Calu3 (cell line): ENCODE measurements at regions of chr1 and their contacts with region 1.

Region 1: DNA sequence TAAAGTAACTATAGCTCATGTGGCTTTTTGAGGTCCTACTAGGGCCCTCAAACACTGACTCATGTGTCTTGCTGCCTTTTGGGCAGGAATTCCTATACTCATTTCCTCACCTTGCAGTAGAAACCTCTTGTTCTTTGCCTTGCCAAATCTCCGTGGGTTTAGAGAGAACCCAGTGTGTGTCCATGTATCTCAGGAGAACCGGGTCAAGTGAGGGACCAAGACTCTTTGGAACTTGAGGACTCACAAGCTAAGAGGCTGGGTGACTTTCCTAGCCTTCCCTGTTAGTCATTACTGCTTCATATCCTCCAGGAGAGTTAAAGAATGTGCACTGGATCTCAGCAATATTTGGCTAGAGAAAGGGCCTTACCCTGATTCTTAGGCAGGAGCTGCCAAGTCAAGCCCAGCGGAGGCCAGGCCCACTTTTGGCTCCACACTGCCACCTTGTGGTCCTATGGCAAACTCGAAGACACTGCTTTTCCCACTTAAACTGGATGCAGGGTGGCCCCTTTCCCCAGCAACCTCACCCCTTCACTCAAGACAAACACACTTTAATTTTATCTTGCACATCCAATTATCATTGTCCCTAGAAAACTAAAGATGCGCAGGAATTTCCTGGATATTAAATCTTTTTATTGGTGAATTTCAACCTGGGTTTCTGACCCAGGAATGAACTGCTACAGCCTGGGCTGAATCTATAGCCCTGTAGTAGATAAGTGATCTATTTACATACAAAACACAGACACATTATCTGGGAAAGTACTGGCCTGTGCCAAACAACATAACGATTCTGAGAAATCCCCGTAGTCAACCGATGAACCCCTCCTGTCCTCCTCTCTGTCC is 10.6 kb downstream of the AVPR1B start:
- DNase-seq: peak; percentile 87
- H3K4me3 Mint-ChIP-seq: no peak overlapping the region
- H3K27ac Mint-ChIP-seq: peak overlapping the region; percentile 42
- H3K4me1 Mint-ChIP-seq: peaks cover 14% of the 10 kb centered on the region
- H3K27me3 Mint-ChIP-seq: no peaks in the 10 kb centered on the region
- CTCF ChIP-seq: peak; percentile 81

Region 2: DNA sequence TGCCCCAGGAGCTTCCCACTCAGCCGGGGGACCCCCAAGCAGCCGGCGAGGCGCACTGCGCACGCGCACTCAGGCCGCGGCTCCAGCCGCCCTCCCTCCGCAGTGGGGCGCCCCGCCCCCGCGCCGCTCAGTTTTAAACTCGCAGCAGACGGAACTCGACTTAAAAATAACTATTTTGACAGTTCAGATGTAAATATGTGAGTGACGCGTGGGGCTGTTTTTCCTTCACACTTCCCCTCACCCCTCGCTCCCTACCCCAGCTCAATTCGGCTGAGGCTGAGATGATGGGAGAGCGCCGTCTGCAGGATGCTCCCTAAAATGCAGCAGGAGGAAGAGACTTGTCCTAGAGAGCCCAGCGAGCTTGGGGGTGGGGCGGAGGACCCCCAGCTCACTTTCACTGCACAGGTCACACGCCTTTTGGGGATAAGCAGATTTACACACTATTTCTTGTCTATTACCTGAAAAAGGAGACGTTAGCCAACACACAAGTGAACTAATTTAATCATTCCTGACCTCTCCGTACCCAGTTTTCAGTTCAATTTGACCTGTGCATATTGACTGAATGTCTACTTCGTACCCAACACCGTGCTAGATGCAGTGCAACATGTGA is 675.7 kb before region 1 on chr1:
- CTCF ChIA-PET with region 1: no interaction called
- intact Hi-C with region 1: no loop called
- DNase-seq: peak; percentile 76
- H3K4me3 Mint-ChIP-seq: peak overlapping the region; percentile 63
- H3K27ac Mint-ChIP-seq: peak overlapping the region; percentile 13
- H3K4me1 Mint-ChIP-seq: peaks cover 8% of the 10 kb centered on the region
- H3K27me3 Mint-ChIP-seq: peaks cover 65% of the 10 kb centered on the region
- CTCF ChIP-seq: peak; percentile 94

Region 3: GRCh38 chr1:205791568-205792180 is 314.9 kb before region 1 on chr1:
- CTCF ChIA-PET with region 1: no interaction called
- intact Hi-C with region 1: loop called (anchors 10 kb)
- DNase-seq: peak; percentile 81
- H3K4me3 Mint-ChIP-seq: no peak overlapping the region
- H3K27ac Mint-ChIP-seq: no peak overlapping the region
- H3K4me1 Mint-ChIP-seq: no peaks in the 10 kb centered on the region
- H3K27me3 Mint-ChIP-seq: no peaks in the 10 kb centered on the region
- CTCF ChIP-seq: peak; percentile 89

Region 4: GRCh38 chr1:205919026-205919746 is 187.4 kb before region 1 on chr1:
- CTCF ChIA-PET with region 1: no interaction called
- intact Hi-C with region 1: loop called (anchors 5 kb)
- DNase-seq: peak; percentile 87
- H3K4me3 Mint-ChIP-seq: no peak overlapping the region
- H3K27ac Mint-ChIP-seq: no peak overlapping the region
- H3K4me1 Mint-ChIP-seq: peaks cover 8% of the 10 kb centered on the region
- H3K27me3 Mint-ChIP-seq: no peaks in the 10 kb centered on the region
- CTCF ChIP-seq: peak; percentile 97

Region 5: DNA sequence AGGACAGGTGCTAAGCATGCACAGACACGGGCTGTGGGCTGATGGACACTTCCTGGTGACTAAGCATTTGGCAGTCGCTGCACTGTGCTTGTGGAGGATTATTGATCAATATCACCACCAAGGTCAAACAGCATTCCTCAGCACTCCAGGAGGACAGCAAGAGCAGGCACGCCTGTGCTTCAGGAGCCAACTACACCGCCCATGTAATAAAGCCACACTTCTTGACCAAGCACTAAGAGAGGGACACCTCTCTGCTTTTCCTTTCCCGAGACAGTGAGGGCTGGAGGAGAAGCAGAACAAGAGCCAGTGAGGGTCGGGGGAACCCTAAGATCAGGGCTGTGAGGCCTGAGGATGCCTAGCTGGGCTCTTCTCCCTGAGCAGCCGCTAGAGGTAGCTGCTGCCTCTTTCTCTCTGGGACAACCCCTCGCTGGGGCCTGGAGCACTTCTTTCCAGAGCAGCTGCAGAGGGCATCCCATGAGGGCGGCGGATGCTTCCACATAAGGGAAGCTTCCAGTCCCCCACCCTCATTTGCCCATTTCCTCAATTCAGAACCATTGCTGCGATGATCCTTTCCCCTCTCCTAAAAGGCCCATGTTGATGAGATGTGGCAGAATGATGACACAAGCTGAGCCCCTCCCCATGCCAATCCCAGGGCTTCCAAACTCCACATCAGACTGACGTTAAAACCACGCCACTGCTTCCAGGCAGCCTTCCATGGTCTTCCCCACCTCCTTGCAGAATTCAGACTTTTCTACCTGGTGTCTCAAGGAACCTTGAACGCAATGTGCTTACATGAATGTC is 122.4 kb before region 1 on chr1:
- CTCF ChIA-PET with region 1: interaction called, 24 read pairs
- intact Hi-C with region 1: loop called (anchors 1 kb)
- DNase-seq: peak; percentile 85
- H3K4me3 Mint-ChIP-seq: peak overlapping the region; percentile 34
- H3K27ac Mint-ChIP-seq: peak overlapping the region; percentile 55
- H3K4me1 Mint-ChIP-seq: peaks cover 35% of the 10 kb centered on the region
- H3K27me3 Mint-ChIP-seq: no peaks in the 10 kb centered on the region
- CTCF ChIP-seq: peak; percentile 73

Region 6: GRCh38 chr1:206030714-206031113 is 75.8 kb before region 1 on chr1:
- CTCF ChIA-PET with region 1: interaction called, 15 read pairs
- intact Hi-C with region 1: loop called (anchors 2 kb)
- DNase-seq: peak; percentile 90
- H3K4me3 Mint-ChIP-seq: no peak overlapping the region
- H3K27ac Mint-ChIP-seq: peak overlapping the region; percentile 20
- H3K4me1 Mint-ChIP-seq: peaks cover 64% of the 10 kb centered on the region
- H3K27me3 Mint-ChIP-seq: no peaks in the 10 kb centered on the region
- CTCF ChIP-seq: peak; percentile 88

Region 7: DNA sequence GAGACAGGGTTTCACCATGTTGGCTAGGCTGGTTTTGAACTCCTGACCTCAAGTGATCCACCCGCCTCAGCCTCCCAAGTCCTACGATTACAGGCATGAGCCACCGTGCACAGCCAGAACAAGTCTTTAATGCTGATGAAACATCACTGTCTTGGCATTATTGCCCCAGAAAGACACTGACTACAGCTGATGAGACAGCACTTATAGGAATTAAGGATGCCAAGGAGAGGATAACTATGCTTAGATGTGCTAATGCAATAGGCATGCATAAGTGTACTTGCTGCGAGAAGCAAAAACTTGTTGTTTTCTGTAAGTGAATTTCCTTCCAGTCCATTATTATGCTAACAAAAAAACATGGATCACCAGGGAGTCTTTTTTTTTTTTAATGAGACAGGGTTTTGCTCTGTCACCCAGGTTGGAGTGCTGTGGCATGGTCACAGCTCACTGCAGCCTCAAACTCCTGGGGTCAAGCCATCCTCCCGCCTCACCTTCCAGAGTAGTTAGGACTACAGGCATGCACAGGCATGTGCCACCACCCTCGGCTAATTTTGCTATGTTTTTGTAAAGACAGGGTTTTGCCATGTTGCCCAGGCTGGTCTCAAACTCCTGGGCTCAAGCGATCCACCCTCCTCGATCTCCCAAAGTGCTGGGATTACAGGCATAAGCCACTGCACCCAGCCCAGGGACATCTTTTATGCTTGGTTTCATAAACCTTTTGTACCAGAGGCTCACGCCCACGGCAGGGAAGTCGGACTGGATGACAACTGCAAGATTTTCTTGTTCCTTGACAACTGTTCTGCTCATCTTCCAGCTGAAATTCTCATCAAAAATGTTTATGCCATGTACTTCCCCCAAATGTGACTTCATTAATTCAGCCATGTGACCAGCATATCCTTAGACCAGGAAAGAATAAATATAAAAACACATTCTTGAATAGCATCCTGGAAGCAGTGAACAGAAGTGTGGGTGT is 30.5 kb before region 1 on chr1:
- CTCF ChIA-PET with region 1: no interaction called
- intact Hi-C with region 1: no loop called
- DNase-seq: no peak
- H3K4me3 Mint-ChIP-seq: no peak overlapping the region
- H3K27ac Mint-ChIP-seq: peak overlapping the region; percentile 78
- H3K4me1 Mint-ChIP-seq: peaks cover 18% of the 10 kb centered on the region
- H3K27me3 Mint-ChIP-seq: no peaks in the 10 kb centered on the region
- CTCF ChIP-seq: no peak